ENCODE measurements at regions of chr15 and their contacts with region 1.

Region 1: GRCh38 chr15:90931737-90932659 is at the start of gene HDDC3:
- DNase-seq: peak; percentile 94
- ATAC-seq: peak; percentile 60
- H3K4me3 Mint-ChIP-seq: peak within 1 kb of the TSS; percentile 99
- H3K27ac Mint-ChIP-seq: peak within 1 kb of the TSS; percentile 99
- H3K4me1 Mint-ChIP-seq: peaks cover 36% of the 10 kb centered on the region
- H3K27me3 Mint-ChIP-seq: no peaks in the 10 kb centered on the region
- CTCF ChIP-seq: peak; percentile 96
- total RNA-seq, gene HDDC3: 34.2 to 35.6 TPM

Region 2: GRCh38 chr15:90902040-90902839 is 29.8 kb before region 1 on chr15:
- CTCF ChIA-PET with region 1: interaction called, 255 read pairs
- POLR2A ChIA-PET with region 1: interaction called, 133 read pairs
- intact Hi-C with region 1: no loop called
- DNase-seq: peak; percentile 79
- ATAC-seq: peak; percentile 73
- H3K4me3 Mint-ChIP-seq: peak overlapping the region; percentile 85
- H3K27ac Mint-ChIP-seq: peak overlapping the region; percentile 94
- H3K4me1 Mint-ChIP-seq: peaks cover 24% of the 10 kb centered on the region
- H3K27me3 Mint-ChIP-seq: no peaks in the 10 kb centered on the region
- CTCF ChIP-seq: peak; percentile 77

Region 3: GRCh38 chr15:90914305-90915080 is 17.5 kb before region 1 on chr15:
- CTCF ChIA-PET with region 1: interaction called, 10 read pairs
- POLR2A ChIA-PET with region 1: interaction called, 7 read pairs
- intact Hi-C with region 1: no loop called
- DNase-seq: no peak
- ATAC-seq: no peak
- H3K4me3 Mint-ChIP-seq: no peak overlapping the region
- H3K27ac Mint-ChIP-seq: no peak overlapping the region
- H3K4me1 Mint-ChIP-seq: no peaks in the 10 kb centered on the region
- H3K27me3 Mint-ChIP-seq: no peaks in the 10 kb centered on the region
- CTCF ChIP-seq: no peak

Region 4: GRCh38 chr15:90946538-90946937 is 14.5 kb after region 1 on chr15:
- CTCF ChIA-PET with region 1: interaction called, 54 read pairs
- POLR2A ChIA-PET with region 1: interaction called, 98 read pairs
- intact Hi-C with region 1: no loop called
- DNase-seq: no peak
- ATAC-seq: no peak
- H3K4me3 Mint-ChIP-seq: no peak overlapping the region
- H3K27ac Mint-ChIP-seq: no peak overlapping the region
- H3K4me1 Mint-ChIP-seq: no peaks in the 10 kb centered on the region
- H3K27me3 Mint-ChIP-seq: no peaks in the 10 kb centered on the region
- CTCF ChIP-seq: no peak

Region 5: GRCh38 chr15:91001209-91001608 is 69.2 kb after region 1 on chr15:
- CTCF ChIA-PET with region 1: no interaction called
- POLR2A ChIA-PET with region 1: no interaction called
- intact Hi-C with region 1: no loop called
- DNase-seq: no peak
- ATAC-seq: no peak
- H3K4me3 Mint-ChIP-seq: no peak overlapping the region
- H3K27ac Mint-ChIP-seq: no peak overlapping the region
- H3K4me1 Mint-ChIP-seq: peaks cover 1% of the 10 kb centered on the region
- H3K27me3 Mint-ChIP-seq: no peaks in the 10 kb centered on the region
- CTCF ChIP-seq: no peak

Measured in activated CD8-positive, alpha-beta T cell treated with anti-CD3 and anti-CD28 coated beads for 36 hours (primary cell).